Panc1 (cell line): ENCODE measurements at regions of chr5 and their contacts with region 1.

Region 1: DNA sequence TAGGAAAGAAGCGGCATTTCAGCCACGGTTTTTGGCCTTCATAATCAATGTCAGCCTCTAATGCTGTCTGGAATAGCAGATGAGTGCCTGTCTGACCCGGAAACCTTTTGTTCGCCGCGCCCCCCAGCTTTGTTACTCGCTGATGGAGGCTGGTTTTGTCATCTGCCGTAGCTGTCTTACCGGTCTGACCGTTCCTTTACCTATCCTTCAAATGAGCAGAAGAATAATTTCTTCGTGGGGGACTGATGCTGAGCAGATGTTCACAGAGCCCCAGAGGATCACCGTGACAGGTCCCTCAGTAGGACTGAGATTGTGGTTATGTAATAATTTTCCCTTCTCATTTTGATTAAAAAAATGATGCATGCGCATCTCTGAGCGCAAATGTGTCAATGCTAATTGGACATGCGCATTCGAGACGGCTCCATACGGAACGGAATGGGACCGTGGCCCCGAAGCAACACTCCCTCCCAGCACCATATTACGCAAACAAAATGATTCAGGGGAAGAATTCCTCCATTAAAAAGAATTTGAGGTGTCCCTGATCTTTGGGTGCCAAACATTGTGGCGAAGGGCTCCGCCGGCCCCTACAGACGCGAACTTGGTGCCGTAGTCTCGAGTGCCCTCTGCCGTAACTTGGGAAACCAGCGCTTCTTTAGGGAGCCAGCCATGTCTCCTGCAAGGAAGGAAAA is 27.6 kb downstream of the TLX3 start:
- DNase-seq: peak; percentile 33
- ATAC-seq: peak; percentile 96
- H3K4me3 ChIP-seq: peak overlapping the region; percentile 34 to 74
- H3K27ac ChIP-seq: no peak overlapping the region
- H3K4me1 ChIP-seq: no peaks in the 10 kb centered on the region
- H3K27me3 ChIP-seq: peaks cover 11% of the 10 kb centered on the region
- CTCF ChIP-seq: peak; percentile 90

Region 2: DNA sequence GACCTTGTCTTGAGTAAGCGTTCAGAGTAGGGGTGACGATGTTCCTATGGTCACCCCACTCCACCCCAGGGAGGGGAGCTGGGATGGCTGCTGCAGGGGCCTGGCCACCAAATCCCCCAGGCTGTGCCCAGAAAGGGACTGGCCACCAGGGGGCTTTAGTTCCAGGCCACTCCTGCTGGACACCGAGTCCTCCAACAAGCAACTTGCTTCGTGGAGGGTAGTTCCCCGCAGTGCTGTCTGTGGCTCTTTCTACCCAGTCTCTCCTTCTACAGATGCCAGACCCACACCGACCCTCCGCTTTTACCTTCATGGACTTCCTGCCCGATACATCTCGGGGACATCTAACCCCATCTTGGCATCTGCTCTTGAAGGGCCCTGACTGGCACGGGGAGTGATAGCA is 588.8 kb before region 1 on chr5:
- CTCF ChIA-PET with region 1: interaction called, 7 read pairs
- POLR2A ChIA-PET with region 1: no interaction called
- in situ Hi-C with region 1: no loop called
- intact Hi-C with region 1: loop called (anchors 2 kb)
- DNase-seq: no peak
- ATAC-seq: peak; percentile 15; the same call in 1 of the 2 replicates
- H3K4me3 ChIP-seq: no peak overlapping the region
- H3K27ac ChIP-seq: no peak overlapping the region
- H3K4me1 ChIP-seq: no peaks in the 10 kb centered on the region
- H3K27me3 ChIP-seq: 0 out of 2 replicates have a peak, but pooled peaks cover 2% of the 10 kb centered on the region
- CTCF ChIP-seq: peak; percentile 63

Region 3: DNA sequence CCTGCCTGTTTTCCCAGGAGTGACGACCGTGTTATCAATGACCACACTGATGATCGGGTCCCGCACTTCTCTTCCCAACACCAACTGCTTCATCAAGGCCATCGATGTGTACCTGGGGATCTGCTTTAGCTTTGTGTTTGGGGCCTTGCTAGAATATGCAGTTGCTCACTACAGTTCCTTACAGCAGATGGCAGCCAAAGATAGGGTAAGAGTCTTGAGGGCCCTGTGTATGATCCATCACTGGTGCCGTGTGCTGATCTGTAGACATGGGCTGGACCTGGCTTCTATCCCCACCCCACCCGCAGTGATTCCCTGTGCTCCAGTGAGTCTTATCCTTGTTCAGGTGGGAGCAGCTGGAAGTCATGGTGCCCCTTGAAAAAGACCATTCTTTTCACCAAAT is 527.1 kb before region 1 on chr5:
- CTCF ChIA-PET with region 1: interaction called, 3 read pairs
- POLR2A ChIA-PET with region 1: no interaction called
- in situ Hi-C with region 1: no loop called
- intact Hi-C with region 1: loop called (anchors 10 kb)
- DNase-seq: no peak
- ATAC-seq: peak; percentile 91
- H3K4me3 ChIP-seq: no peak overlapping the region
- H3K27ac ChIP-seq: no peak overlapping the region
- H3K4me1 ChIP-seq: no peaks in the 10 kb centered on the region
- H3K27me3 ChIP-seq: no peaks in the 10 kb centered on the region
- CTCF ChIP-seq: peak; percentile 36; the same call in 1 of the 2 replicates

Region 4: DNA sequence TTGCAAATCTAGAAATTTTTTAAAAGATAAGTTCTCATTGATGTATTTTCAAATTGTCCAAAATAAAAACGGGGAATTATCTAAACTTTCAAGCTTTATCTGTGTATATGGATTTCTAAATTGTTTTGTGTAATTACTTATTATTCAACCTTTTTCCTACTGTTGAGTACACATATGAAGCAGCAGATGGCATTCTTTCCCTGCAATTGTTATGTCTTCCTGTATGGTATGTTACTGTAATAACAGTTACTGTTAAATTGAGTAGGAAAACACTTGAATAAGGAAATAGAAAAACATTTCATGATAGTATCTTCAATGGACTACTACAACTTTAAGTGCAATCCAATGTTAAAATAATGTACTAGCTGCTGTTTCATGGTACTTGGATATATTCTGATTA is 350.1 kb before region 1 on chr5:
- CTCF ChIA-PET with region 1: no interaction called
- POLR2A ChIA-PET with region 1: no interaction called
- in situ Hi-C with region 1: no loop called
- intact Hi-C with region 1: loop called (anchors 5 kb)
- DNase-seq: no peak
- ATAC-seq: no peak
- H3K4me3 ChIP-seq: no peak overlapping the region
- H3K27ac ChIP-seq: no peak overlapping the region
- H3K4me1 ChIP-seq: no peaks in the 10 kb centered on the region
- H3K27me3 ChIP-seq: peaks cover 3% of the 10 kb centered on the region
- CTCF ChIP-seq: no peak; the same call in 1 of the 2 replicates

Region 5: GRCh38 chr5:171207256-171207847 is 129.3 kb before region 1 on chr5:
- CTCF ChIA-PET with region 1: interaction called, 19 read pairs
- POLR2A ChIA-PET with region 1: no interaction called
- in situ Hi-C with region 1: no loop called
- intact Hi-C with region 1: loop called (anchors 1 kb)
- DNase-seq: peak; percentile 20
- ATAC-seq: 0 out of 2 replicates have a peak, but pooled peaks have one; percentile 70
- H3K4me3 ChIP-seq: no peak overlapping the region
- H3K27ac ChIP-seq: no peak overlapping the region
- H3K4me1 ChIP-seq: no peaks in the 10 kb centered on the region
- H3K27me3 ChIP-seq: peaks cover 7% of the 10 kb centered on the region; the same call in 1 of the 2 replicates
- CTCF ChIP-seq: peak; percentile 73

Region 6: DNA sequence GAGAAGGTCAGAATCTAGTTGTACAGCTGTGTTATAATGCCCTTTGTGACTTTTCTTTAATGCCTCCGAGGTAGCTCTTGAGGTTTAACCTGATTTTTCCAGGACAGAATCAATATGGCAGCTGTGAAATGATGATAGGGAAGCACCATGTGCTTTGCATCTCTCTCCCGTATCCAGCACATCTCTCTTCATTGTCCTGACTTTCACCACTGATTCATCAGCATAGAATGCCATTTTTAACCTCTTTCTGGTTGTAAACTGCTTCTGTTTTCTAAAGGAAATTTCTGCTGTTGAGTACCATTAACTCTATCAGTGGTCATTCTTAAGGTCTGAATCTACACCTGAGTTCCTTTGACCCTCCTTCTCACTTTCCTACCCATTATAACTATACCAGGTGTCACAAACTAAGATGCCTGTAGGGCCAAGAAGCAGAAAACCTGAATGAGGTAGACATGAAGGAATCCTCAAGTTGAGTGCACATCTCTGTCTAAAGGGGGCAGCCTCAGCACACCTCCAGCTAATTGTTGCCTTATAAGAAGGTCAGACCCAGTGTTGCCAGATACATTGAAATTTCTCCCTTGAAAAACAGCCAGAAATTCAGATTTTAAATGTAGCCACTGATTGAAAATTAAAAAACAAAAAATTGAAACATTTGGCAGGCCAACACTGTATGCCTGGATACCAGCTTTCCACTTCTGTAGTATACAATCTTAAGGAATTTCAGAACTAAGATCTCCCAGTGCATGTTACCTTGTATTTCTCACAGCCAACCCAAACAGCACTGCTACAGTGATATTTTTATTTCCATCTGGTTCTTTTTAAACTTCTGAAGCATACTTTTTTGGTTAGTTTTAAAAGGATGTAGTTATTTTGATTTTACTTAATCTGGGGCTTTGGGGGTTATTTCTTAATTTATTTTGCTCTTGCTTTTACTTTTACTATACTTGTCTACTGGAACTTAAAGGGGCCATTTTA is 63.4 kb before region 1 on chr5:
- CTCF ChIA-PET with region 1: no interaction called
- POLR2A ChIA-PET with region 1: no interaction called
- in situ Hi-C with region 1: no loop called
- intact Hi-C with region 1: loop called (anchors 1 kb)
- DNase-seq: no peak
- ATAC-seq: peak; percentile 87
- H3K4me3 ChIP-seq: no peak overlapping the region
- H3K27ac ChIP-seq: no peak overlapping the region
- H3K4me1 ChIP-seq: no peaks in the 10 kb centered on the region
- H3K27me3 ChIP-seq: no peaks in the 10 kb centered on the region; the same call in none of the 2 replicates
- CTCF ChIP-seq: peak; percentile 74

Region 7: GRCh38 chr5:171387345-171387969 is 50.8 kb after region 1 on chr5 and contains the start of gene NPM1:
- CTCF ChIA-PET with region 1: no interaction called
- POLR2A ChIA-PET with region 1: no interaction called
- in situ Hi-C with region 1: no loop called
- intact Hi-C with region 1: no loop called
- DNase-seq: peak; percentile 97
- ATAC-seq: peak; percentile 90
- H3K4me3 ChIP-seq: peak within 1 kb of the TSS; percentile 93 to 96
- H3K27ac ChIP-seq: peak within 1 kb of the TSS; percentile 99
- H3K4me1 ChIP-seq: peaks cover 16% of the 10 kb centered on the region
- H3K27me3 ChIP-seq: no peaks in the 10 kb centered on the region
- CTCF ChIP-seq: no peak
- total RNA-seq, gene NPM1: 1,864 TPM